Posterior vena cava (tissue), 2 donors: ENCODE measurements at regions of chr16 and their contacts with region 1.

Region 1: GRCh38 chr16:28250999-28251398 is 39.2 kb upstream of the XPO6 start:
- DNase-seq: no peak

Region 2: DNA sequence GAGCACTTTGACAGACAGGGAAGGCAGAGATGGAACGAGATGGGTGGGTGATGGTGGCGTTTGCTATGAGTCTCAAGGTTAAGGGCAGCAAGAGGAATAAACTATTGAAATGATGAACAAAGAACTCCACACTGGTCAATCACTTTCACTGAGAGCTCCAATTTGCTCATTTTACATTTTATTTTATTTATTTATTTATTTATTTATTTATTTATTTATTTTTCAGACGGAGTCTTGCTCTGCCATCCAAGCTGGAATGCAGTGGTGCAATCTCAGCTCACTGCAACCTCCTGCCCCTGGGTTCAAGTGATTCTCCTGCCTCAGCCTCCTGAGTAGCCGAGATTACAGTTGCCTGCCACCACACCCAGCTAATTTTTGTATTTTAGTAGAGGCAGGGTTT is 1890.1 kb before region 1 on chr16:
- intact Hi-C with region 1: no loop called
- DNase-seq: no peak

Region 3: GRCh38 chr16:28126684-28127620 is 124.0 kb before region 1 on chr16:
- intact Hi-C with region 1: loop called in 1 of 2 experiments (anchors 2 kb)
- DNase-seq: no peak